ENCODE measurements at regions of chr3 and their contacts with region 1.

Region 1: DNA sequence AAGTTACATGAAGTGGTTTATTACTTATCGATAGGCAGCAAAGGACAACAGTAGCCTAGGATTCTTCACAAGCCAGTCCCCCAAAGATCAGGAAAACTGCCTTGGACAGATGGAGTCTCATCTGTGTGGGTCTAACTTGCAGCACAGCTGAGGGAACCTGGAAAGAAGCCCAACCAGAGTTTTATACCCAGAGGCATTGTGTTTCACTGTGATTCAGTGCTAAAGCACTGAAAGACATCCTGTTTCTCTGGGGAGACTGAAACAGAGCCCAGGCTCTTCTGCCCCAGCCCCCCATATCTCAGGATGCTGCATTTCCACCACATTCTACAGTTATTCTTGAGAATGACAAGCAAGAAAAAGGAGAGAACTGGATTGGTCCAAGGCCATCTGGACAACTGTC is 48.2 kb upstream of the PYDC2 start:
- DNase-seq: no peak
- H3K4me3 ChIP-seq: no peak overlapping the region
- H3K4me3 Mint-ChIP-seq: no peak overlapping the region
- H3K27ac Mint-ChIP-seq: no peak overlapping the region
- H3K4me1 ChIP-seq: no peaks in the 10 kb centered on the region
- H3K4me1 Mint-ChIP-seq: no peaks in the 10 kb centered on the region
- H3K27me3 ChIP-seq: no peaks in the 10 kb centered on the region
- H3K27me3 Mint-ChIP-seq: no peaks in the 10 kb centered on the region
- CTCF ChIP-seq: no peak

Region 2: GRCh38 chr3:191502583-191502982 is 89.8 kb after region 1 on chr3:
- CTCF ChIA-PET with region 1: no interaction called
- POLR2A ChIA-PET with region 1: no interaction called
- intact Hi-C with region 1: loop called (anchors 1 kb)
- DNase-seq: peak in 1 of 2 experiments; percentile 5
- H3K4me3 ChIP-seq: no peak overlapping the region
- H3K4me3 Mint-ChIP-seq: no peak overlapping the region
- H3K27ac Mint-ChIP-seq: no peak overlapping the region
- H3K4me1 ChIP-seq: no peaks in the 10 kb centered on the region; the same call in 1 of the 2 replicates
- H3K4me1 Mint-ChIP-seq: peaks cover 6% of the 10 kb centered on the region
- H3K27me3 ChIP-seq: no peaks in the 10 kb centered on the region
- H3K27me3 Mint-ChIP-seq: no peaks in the 10 kb centered on the region
- CTCF ChIP-seq: peak; percentile 29 to 40

Region 3: GRCh38 chr3:192188218-192188835 is 775.6 kb after region 1 on chr3:
- CTCF ChIA-PET with region 1: no interaction called
- POLR2A ChIA-PET with region 1: no interaction called
- intact Hi-C with region 1: loop called (anchors 10 kb)
- DNase-seq: peak; percentile 42 to 59
- H3K4me3 ChIP-seq: no peak overlapping the region
- H3K4me3 Mint-ChIP-seq: no peak overlapping the region
- H3K27ac Mint-ChIP-seq: no peak overlapping the region
- H3K4me1 ChIP-seq: no peaks in the 10 kb centered on the region
- H3K4me1 Mint-ChIP-seq: peaks cover 7% of the 10 kb centered on the region
- H3K27me3 ChIP-seq: no peaks in the 10 kb centered on the region
- H3K27me3 Mint-ChIP-seq: no peaks in the 10 kb centered on the region
- CTCF ChIP-seq: peak; percentile 72

Region 4: GRCh38 chr3:192423003-192423349 is 1010.2 kb after region 1 on chr3:
- CTCF ChIA-PET with region 1: no interaction called
- POLR2A ChIA-PET with region 1: no interaction called
- intact Hi-C with region 1: loop called (anchors 1 kb)
- DNase-seq: no peak
- H3K4me3 ChIP-seq: no peak overlapping the region
- H3K4me3 Mint-ChIP-seq: no peak overlapping the region
- H3K27ac Mint-ChIP-seq: no peak overlapping the region
- H3K4me1 ChIP-seq: no peaks in the 10 kb centered on the region; the same call in 1 of the 2 replicates
- H3K4me1 Mint-ChIP-seq: no peaks in the 10 kb centered on the region
- H3K27me3 ChIP-seq: no peaks in the 10 kb centered on the region
- H3K27me3 Mint-ChIP-seq: peaks cover 3% of the 10 kb centered on the region
- CTCF ChIP-seq: no peak